ENCODE measurements at regions of chr5 and their contacts with region 1.

Region 1: GRCh38 chr5:180784497-180785097 is 18.0 kb downstream of the MGAT1 start:
- DNase-seq: peak; percentile 81 to 90
- ATAC-seq: peak; percentile 78 to 91 (median 84)
- H3K4me3 ChIP-seq: peak overlapping the region; percentile 15
- H3K27ac ChIP-seq: no peak overlapping the region
- H3K4me1 ChIP-seq: peaks cover 20% of the 10 kb centered on the region
- H3K27me3 ChIP-seq: no peaks in the 10 kb centered on the region
- CTCF ChIP-seq: peak; percentile 82

Region 2: DNA sequence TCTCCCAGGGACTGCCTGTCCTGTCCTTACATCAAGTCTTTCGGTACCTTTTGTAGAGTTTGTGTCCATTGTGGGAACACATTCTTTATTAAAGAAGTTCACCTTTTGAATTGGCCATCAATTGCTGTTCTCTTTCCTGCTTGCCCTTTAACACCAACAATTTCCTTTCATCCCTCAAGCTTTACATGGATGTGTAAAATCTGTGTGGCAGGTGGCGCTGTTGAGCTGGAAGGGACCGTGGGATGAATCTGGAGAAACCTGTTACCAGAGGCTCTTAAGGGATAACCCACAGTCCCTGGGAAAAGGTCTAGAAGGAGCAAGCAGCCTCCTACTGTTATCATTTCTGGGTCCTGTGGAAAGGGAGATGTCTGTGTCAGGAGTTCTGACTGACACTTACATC is 84.4 kb after region 1 on chr5:
- intact Hi-C with region 1: loop called (anchors 5 kb)
- DNase-seq: peak; percentile 75 to 84
- ATAC-seq: peak in 3 of 4 donors; percentile 55 to 85 (median 72)
- H3K4me3 ChIP-seq: no peak overlapping the region
- H3K27ac ChIP-seq: no peak overlapping the region
- H3K4me1 ChIP-seq: no peaks in the 10 kb centered on the region
- H3K27me3 ChIP-seq: peaks cover 0 to 6% (median 0%) of the 10 kb centered on the region in 3 donors
- CTCF ChIP-seq: peak; percentile 67

Region 3: DNA sequence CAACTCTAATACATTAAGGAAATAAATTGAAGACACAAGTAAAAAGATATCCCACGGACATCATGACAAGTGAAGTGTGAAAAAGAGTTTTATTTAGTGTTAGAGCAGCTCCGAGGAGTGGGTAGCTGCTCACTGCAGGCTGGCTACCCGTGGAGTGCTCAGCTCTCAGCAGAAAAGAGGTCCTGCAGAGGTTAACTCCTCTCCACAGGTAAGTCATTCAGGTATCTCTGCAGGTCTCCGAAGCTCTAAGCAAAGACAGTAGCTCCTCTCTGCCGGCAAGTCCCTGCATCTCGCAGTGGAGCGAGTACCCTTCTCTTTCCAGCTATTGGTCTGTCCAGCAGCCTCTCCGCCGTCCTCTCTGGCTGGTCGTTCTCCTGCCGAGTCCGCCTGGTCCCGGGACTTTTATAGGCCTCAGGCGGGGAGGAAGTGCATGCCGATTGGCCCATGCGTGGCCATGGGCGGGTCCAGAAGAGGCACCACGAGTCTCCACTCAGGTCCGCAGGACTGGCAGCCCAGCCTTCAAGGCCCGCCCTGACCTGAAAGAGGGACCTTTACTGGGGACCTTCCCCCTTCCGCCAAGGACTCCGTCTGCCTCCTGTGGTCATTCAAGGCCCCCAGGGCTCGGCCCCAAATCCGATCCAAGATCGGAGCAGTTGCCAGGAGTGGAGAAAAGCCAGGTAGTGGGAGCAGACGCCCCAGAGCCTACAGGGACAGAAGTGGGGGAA is 285.3 kb after region 1 on chr5:
- intact Hi-C with region 1: no loop called
- DNase-seq: no peak
- ATAC-seq: no peak
- H3K4me3 ChIP-seq: no peak overlapping the region
- H3K27ac ChIP-seq: no peak overlapping the region
- H3K4me1 ChIP-seq: no peaks in the 10 kb centered on the region
- H3K27me3 ChIP-seq: peaks cover 0 to 20% (median 13%) of the 10 kb centered on the region in 3 donors
- CTCF ChIP-seq: no peak

Region 4: DNA sequence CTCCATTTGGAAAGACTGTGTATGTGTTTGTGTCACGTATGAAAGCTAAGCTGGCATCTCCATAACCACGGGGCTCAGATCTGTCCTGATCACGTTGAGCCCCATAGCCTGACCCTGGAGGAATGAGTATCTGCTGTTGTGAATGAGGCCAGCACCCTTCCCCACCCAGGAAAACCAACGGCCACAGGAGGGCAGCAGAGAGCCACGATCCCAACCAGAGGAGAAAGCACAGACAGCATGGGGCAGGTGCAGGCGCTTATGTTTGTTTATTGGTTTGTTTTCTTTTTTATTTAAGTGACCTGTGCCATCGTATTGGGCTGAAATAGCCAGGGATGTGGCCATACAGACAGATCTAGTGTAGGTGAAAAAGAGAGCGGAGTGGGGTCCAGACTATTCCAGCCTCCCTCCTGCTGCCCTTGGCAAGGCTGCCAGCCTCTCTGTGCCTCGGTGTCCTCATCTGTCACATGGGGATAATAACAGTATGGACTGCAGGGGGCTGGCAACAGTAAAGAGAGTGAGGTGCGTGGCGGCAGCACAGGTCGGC is 374.8 kb after region 1 on chr5:
- intact Hi-C with region 1: loop called (anchors 2 to 5 kb)
- DNase-seq: peak; percentile 87 to 93
- ATAC-seq: peak; percentile 90 to 97 (median 92)
- H3K4me3 ChIP-seq: no peak overlapping the region
- H3K27ac ChIP-seq: no peak overlapping the region
- H3K4me1 ChIP-seq: peaks cover 5% of the 10 kb centered on the region
- H3K27me3 ChIP-seq: peaks cover 0 to 2% (median 2%) of the 10 kb centered on the region in 3 donors
- CTCF ChIP-seq: peak; percentile 83

Measured in psoas muscle (tissue), 8 donors.